GM23248 (cell line): ENCODE measurements at regions of chr15 and their contacts with region 1.

Region 1: GRCh38 chr15:93997084-93997918 is 234.1 kb upstream of the MCTP2 start:
- DNase-seq: peak; percentile 58
- H3K4me3 ChIP-seq: no peak overlapping the region
- H3K27ac ChIP-seq: no peak overlapping the region
- H3K4me1 ChIP-seq: peaks cover 15% of the 10 kb centered on the region
- H3K27me3 ChIP-seq: peaks cover 13% of the 10 kb centered on the region; the same call in 1 of the 2 replicates

Region 2: DNA sequence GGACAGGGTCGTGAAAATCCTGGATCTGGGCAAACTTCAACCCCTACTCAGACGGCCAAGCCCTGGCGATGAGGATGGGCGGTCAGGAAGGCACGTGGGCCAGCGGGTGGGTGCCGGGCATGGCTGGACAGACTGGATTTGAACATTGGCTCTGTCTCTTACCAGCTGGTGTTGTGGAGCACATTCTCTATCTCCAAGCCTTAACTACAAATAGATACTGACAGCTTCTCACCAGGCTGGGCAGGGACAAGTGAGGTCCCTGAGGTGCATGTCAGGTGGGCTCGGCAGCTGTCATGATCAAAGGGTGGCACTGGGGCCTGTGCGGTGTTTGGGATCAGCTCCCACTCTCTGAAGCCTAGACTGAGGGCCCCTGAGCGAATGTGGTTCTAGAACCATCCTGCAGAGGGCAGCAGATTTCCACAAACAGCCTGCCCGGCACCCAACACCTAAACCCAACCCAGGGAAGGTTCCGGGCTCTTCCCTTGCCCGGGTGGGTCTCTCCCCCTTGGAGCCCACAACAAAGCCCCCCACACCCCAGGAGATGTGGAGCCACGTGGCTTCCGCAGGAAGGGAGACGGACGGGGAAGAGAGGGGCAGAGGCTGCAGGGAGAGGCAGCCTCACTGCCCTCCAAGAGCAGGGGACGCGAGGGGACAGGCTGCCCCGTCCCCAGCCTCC is 966.7 kb before region 1 on chr15:
- in situ Hi-C with region 1: loop called (anchors 25 kb)
- DNase-seq: peak; percentile 79
- H3K4me3 ChIP-seq: no peak overlapping the region
- H3K27ac ChIP-seq: no peak overlapping the region
- H3K4me1 ChIP-seq: peaks cover 27% of the 10 kb centered on the region
- H3K27me3 ChIP-seq: no peaks in the 10 kb centered on the region

Region 3: GRCh38 chr15:94119923-94120775 is 122.8 kb after region 1 on chr15:
- in situ Hi-C with region 1: loop called (anchors 10 kb)
- DNase-seq: peak; percentile 94
- H3K4me3 ChIP-seq: peak overlapping the region; percentile 21; the same call in 1 of the 2 replicates
- H3K27ac ChIP-seq: no peak overlapping the region
- H3K4me1 ChIP-seq: peaks cover 5% of the 10 kb centered on the region
- H3K27me3 ChIP-seq: no peaks in the 10 kb centered on the region